Mammary epithelial cell (primary cell): ENCODE measurements at regions of chr2 and their contacts with region 1.

Region 1: DNA sequence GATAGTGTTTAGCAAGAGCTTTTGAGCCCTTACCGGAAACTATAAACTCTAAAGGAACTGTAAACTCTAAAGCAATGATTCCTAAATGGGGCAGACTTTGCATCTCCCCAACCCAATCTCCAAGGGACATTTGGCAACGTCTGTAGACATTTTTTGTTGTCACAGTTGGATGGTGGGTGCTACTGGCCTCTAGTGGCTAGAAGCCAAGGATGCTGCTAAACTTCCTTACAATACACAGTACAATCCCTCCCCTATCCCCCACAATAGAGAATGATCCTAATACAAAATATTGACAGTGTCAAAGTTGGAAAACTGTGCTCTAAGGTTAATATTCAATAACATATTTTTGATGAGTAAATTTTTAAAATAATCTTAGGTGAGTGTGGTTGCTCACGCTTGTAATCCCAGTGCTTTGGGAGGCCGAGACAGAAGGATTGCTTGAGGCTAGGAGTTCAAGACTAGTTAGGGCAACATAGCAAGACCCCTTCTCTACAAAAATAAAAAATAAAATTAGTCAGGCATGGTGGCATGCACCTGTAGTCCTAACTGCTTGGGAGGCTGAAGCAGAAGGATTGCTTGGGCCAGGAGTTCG is 66.7 kb downstream of the PTPN4 start:
- DNase-seq: no peak
- H3K4me3 ChIP-seq: no peak overlapping the region
- H3K27ac ChIP-seq: no peak overlapping the region
- H3K4me1 ChIP-seq: no peaks in the 10 kb centered on the region
- H3K27me3 ChIP-seq: no peaks in the 10 kb centered on the region
- CTCF ChIP-seq: peak; percentile 65 to 72

Region 2: GRCh38 chr2:119702918-119703401 is 123.5 kb before region 1 on chr2:
- CTCF ChIA-PET with region 1: interaction called, 15 read pairs
- dilution Hi-C with region 1: no loop called
- in situ Hi-C with region 1: no loop called
- intact Hi-C with region 1: loop called (anchors 1 kb)
- DNase-seq: peak; percentile 44
- H3K4me3 ChIP-seq: no peak overlapping the region
- H3K27ac ChIP-seq: no peak overlapping the region
- H3K4me1 ChIP-seq: no peaks in the 10 kb centered on the region
- H3K27me3 ChIP-seq: no peaks in the 10 kb centered on the region
- CTCF ChIP-seq: peak; percentile 90 to 99

Region 3: GRCh38 chr2:119753041-119753929 is 73.2 kb before region 1 on chr2:
- CTCF ChIA-PET with region 1: no interaction called
- dilution Hi-C with region 1: loop called (anchors 5 kb)
- in situ Hi-C with region 1: no loop called
- intact Hi-C with region 1: loop called (anchors 1 kb)
- DNase-seq: peak; percentile 32
- H3K4me3 ChIP-seq: no peak overlapping the region
- H3K27ac ChIP-seq: no peak overlapping the region
- H3K4me1 ChIP-seq: peaks cover 52% of the 10 kb centered on the region
- H3K27me3 ChIP-seq: no peaks in the 10 kb centered on the region
- CTCF ChIP-seq: peak; percentile 54 to 58

Region 4: DNA sequence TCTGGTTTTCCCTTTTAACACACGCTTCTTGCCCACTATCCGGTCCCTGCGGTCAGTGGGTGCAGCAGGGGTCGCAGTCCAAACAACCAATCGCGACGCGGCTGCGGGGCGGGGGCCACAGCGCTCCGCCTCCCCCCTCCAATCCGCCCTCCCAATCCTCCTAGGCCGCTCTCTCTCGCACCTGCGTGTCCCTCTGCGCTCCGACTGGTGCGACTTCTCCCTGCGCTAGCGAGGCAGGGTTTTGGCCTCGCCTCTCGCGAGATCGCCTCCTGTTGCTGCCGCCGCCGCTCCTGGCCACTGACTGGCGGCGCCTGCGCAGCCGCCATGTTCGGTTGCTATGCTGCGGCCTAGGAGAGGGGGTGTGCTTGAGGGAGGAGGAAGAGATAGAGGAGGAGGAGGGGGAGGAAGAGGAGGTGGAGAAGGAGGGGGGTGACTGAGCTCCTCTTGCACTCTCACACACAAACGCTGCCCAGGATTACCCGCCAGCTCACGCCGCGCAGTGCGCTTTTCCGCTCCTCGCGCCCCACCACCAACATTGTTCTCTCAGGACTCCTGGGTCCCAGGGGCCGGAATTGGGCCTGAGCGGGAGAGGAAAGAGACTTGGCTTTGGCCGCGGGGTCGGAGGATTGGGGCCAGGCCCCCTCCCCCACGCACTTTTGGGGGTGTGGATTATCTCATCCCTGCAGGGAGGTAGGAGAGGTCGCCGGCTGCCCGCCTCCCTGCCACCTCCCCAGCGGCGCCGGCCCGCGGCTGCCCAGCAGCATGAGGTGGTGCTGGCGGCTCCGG is 66.8 kb before region 1 on chr2 and contains the start of gene PTPN4:
- CTCF ChIA-PET with region 1: interaction called, 9 read pairs
- dilution Hi-C with region 1: loop called (anchors 5 kb)
- in situ Hi-C with region 1: no loop called
- intact Hi-C with region 1: loop called (anchors 1 kb)
- DNase-seq: peak; percentile 99
- H3K4me3 ChIP-seq: peak within 1 kb of the TSS; percentile 63 to 85 (median 83)
- H3K27ac ChIP-seq: peak within 1 kb of the TSS; percentile 77
- H3K4me1 ChIP-seq: peaks cover 17% of the 10 kb centered on the region
- H3K27me3 ChIP-seq: no peaks in the 10 kb centered on the region
- CTCF ChIP-seq: no peak
- total RNA-seq, gene PTPN4: 36.9 to 48.7 TPM